Activated T-helper 1 cell treated with anti-CD3 and anti-CD28 coated beads, Interleukin-12 subunit alpha, Interleukin-12 subunit beta, Interleukin-2, Interleukin-4 antibody, amounts not matched to agents 30 ng/mL and 10 ng/mL and 1 ng/mL, durations not matched to agents 14 hours and 24 hours and 36 hours (primary cell): ENCODE measurements at regions of chr15 and their contacts with region 1.

Region 1: DNA sequence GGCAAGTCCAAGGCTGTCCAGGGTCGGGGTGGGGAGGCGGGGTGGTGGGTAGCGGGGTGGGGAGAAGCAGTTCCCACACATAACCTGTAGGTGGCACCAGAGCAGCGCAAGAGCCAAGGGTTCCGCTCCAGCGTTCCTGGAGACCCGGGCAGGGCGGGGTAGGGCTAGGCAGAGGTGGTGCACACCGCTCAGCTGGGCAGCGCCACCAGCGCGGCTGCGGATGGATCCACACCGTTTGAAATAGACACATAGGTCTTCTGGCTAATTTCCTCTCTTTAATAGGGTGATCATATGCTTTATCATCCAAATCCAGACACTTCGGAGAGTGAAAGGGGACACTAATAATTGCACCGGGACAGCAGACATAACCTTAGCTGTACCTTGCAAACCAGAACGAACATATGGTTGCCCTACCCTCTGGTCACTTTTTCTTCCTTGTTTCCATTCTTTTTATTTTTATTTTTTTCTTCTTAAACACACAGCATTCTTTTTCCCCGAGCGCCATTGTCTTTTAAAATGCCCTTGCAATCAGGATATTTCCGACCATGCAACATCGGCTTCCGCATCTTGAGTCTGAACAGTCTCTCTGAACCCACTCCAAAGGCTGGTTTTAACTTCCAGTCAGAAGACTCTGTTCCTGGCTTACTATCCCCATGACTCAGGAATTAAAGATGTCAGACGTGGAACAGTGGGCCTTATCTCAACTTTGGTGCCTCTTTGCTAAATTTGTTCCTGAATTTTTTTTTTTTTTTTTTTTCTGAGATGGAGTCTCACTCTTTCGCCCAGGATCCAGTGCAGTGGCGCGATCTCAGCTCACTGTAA is 12.5 kb upstream of the ZSCAN2 start:
- DNase-seq: peak; percentile 78
- H3K4me3 Mint-ChIP-seq: peak overlapping the region; percentile 62
- H3K27ac Mint-ChIP-seq: no peak overlapping the region
- H3K4me1 Mint-ChIP-seq: peaks cover 7% of the 10 kb centered on the region
- H3K27me3 Mint-ChIP-seq: peaks cover 21% of the 10 kb centered on the region

Region 2: GRCh38 chr15:84600851-84601838 is 12.9 kb after region 1 on chr15 and contains the start of gene ZSCAN2:
- intact Hi-C with region 1: loop called (anchors 1 kb)
- DNase-seq: peak; percentile 92
- H3K4me3 Mint-ChIP-seq: peak within 1 kb of the TSS; percentile 89
- H3K27ac Mint-ChIP-seq: peak within 1 kb of the TSS; percentile 72
- H3K4me1 Mint-ChIP-seq: peaks cover 59% of the 10 kb centered on the region
- H3K27me3 Mint-ChIP-seq: no peaks in the 10 kb centered on the region
- total RNA-seq, gene ZSCAN2: 6.5 and 7.0 TPM in 2 replicates

Region 3: GRCh38 chr15:84633311-84634227 is 45.3 kb after region 1 on chr15:
- intact Hi-C with region 1: loop called (anchors 1 kb)
- DNase-seq: peak; percentile 60
- H3K4me3 Mint-ChIP-seq: peak overlapping the region; percentile 95
- H3K27ac Mint-ChIP-seq: peak overlapping the region; percentile 98
- H3K4me1 Mint-ChIP-seq: peaks cover 57% of the 10 kb centered on the region
- H3K27me3 Mint-ChIP-seq: no peaks in the 10 kb centered on the region

Region 4: DNA sequence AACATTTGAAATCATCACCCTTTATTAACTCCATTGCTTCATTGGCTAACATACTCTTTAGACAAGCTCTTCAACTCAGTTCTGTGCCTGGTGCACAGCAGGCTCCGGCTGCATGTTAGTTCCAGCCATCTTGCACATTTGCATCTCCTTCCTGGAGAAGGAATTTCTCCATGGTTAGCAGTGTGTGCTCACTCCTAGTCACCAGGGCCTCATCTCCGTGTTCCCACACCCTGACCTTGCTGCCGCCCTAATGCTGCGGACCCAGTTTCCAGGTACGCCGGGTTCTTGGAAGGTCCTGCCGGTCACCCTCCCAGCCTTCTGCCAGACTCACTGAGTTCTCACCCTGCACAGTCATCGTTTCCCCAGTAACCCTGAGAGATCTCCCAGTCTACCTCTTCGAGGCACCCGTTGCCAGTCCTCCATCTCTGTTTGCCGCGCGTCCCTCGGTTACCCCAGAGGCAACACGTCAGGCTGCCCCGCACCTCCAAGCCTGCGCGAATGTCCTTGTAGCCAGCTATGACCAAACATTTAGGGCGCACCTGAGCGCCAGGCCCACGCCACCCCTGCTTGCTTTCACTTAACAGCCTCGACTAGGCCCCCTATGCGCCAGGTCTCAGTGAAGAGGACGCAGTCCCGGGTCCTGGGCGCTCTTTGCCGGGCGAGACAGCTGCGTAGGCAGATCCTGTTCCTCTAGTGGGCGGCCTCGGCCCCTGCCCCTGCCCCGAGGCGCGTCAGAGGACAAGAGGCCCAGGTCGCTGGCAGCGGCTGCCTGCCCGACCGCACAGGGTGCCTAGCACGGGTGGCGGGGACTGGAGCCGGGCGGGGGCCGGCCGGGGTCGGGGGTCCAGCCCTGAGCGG is 159.4 kb after region 1 on chr15:
- intact Hi-C with region 1: no loop called
- DNase-seq: peak; percentile 66
- H3K4me3 Mint-ChIP-seq: peak overlapping the region; percentile 91
- H3K27ac Mint-ChIP-seq: peak overlapping the region; percentile 95
- H3K4me1 Mint-ChIP-seq: peaks cover 51% of the 10 kb centered on the region
- H3K27me3 Mint-ChIP-seq: no peaks in the 10 kb centered on the region

Region 5: GRCh38 chr15:84883433-84883832 is 295.2 kb after region 1 on chr15:
- intact Hi-C with region 1: loop called (anchors 1 kb)
- DNase-seq: no peak
- H3K4me3 Mint-ChIP-seq: no peak overlapping the region
- H3K27ac Mint-ChIP-seq: no peak overlapping the region
- H3K4me1 Mint-ChIP-seq: no peaks in the 10 kb centered on the region
- H3K27me3 Mint-ChIP-seq: no peaks in the 10 kb centered on the region

Region 6: GRCh38 chr15:84929744-84930371 is 341.6 kb after region 1 on chr15:
- intact Hi-C with region 1: loop called (anchors 1 kb)
- DNase-seq: no peak
- H3K4me3 Mint-ChIP-seq: no peak overlapping the region
- H3K27ac Mint-ChIP-seq: no peak overlapping the region
- H3K4me1 Mint-ChIP-seq: peaks cover 6% of the 10 kb centered on the region
- H3K27me3 Mint-ChIP-seq: no peaks in the 10 kb centered on the region

Region 7: DNA sequence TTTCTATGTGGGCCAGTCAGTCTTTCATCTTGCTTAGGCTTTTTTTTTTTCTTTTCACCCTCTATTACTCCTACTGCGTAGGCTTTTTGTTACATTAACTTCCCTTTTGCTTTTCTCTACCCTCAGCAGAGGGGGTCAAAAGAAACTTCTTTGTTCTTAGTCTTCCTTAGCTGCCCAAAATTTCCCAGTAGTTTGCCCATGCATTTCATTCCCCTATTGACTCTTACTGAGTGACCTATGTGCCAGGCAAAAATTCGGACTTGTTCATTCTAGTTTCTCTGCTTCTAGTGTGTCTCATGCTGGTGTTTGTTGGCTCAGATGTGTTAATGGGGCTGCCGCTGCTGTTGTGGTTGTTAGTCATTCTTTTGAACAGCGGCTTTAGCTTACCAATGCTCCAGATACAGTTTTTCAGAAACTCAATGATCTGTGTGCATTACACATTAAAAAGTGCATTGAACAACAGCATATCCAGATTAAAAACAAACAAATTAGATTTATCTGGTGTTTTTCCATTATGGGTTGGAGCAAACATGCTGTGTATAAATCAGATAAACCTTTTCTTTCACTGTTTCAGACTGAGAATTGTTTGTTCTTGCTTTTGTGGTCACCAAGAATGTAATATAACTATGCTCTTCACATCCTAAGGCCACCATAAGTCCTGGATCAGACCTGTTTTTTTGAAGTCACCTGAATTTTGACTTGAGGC is 436.4 kb after region 1 on chr15:
- intact Hi-C with region 1: no loop called
- DNase-seq: no peak
- H3K4me3 Mint-ChIP-seq: no peak overlapping the region
- H3K27ac Mint-ChIP-seq: no peak overlapping the region
- H3K4me1 Mint-ChIP-seq: peaks cover 36% of the 10 kb centered on the region
- H3K27me3 Mint-ChIP-seq: no peaks in the 10 kb centered on the region

Region 8: GRCh38 chr15:85044251-85044853 is 456.1 kb after region 1 on chr15:
- intact Hi-C with region 1: loop called (anchors 1 kb)
- DNase-seq: no peak
- H3K4me3 Mint-ChIP-seq: no peak overlapping the region
- H3K27ac Mint-ChIP-seq: no peak overlapping the region
- H3K4me1 Mint-ChIP-seq: peaks cover 12% of the 10 kb centered on the region
- H3K27me3 Mint-ChIP-seq: no peaks in the 10 kb centered on the region

Region 9: GRCh38 chr15:85168642-85169173 is 580.4 kb after region 1 on chr15:
- intact Hi-C with region 1: loop called (anchors 10 kb)
- DNase-seq: no peak
- H3K4me3 Mint-ChIP-seq: no peak overlapping the region
- H3K27ac Mint-ChIP-seq: no peak overlapping the region
- H3K4me1 Mint-ChIP-seq: peaks cover 4% of the 10 kb centered on the region
- H3K27me3 Mint-ChIP-seq: peaks cover 36% of the 10 kb centered on the region